Common myeloid progenitor, CD34-positive (primary cell): ENCODE measurements at regions of chr1 and their contacts with region 1.

Region 1: GRCh38 chr1:161298116-161298515 is 11.7 kb downstream of the MPZ start:
- DNase-seq: peak in 2 of 3 donors; percentile 28 to 37
- H3K4me3 ChIP-seq: no peak overlapping the region
- H3K27ac ChIP-seq: no peak overlapping the region
- H3K4me1 ChIP-seq: peaks cover 0 to 11% (median 4%) of the 10 kb centered on the region in 4 experiments
- H3K27me3 ChIP-seq: no peaks in the 10 kb centered on the region

Region 2: DNA sequence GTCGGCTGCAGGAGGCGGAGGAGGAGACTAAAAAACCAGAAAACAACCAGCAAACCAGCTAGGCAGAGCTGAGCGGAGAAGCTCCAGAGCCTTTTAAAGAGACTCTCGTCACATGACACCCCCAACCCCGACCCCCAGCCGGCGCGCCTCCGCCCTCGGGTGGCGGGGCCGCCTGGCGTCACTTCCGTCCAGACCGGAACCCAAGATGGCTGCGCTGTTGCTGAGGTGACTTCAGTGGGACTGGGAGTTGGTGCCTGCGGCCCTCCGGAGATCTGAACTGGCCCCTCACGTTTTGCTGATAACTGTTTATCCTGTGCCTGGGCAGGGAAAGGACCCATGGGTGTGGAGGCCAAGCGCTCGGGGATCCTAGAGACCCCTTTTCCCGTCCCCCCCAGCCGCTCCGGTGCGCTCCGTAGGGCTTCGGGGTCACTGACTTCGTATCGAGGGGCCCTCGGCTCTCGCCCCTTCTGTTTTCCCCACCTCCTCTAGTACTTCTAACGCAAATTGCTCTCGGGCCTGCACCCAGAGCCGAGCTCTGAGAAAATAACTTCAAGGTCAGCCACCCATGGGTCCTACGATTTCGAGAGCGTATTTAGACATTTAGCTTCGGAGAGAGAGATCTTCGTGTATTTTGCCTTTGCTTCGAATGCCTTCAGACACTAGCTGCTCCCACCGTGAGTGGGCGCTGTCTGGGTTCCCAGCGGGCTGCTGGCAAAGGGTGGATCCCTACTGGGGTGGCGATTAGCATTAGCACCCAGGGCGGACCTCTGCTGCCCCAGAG is 16.3 kb after region 1 on chr1 and contains the start of gene SDHC:
- CTCF ChIA-PET with region 1: interaction called, 12 read pairs
- POLR2A ChIA-PET with region 1: no interaction called
- DNase-seq: peak; percentile 92 to 97 (median 95)
- H3K4me3 ChIP-seq: peak within 1 kb of the TSS; percentile 84 to 99 (median 95)
- H3K27ac ChIP-seq: peak within 1 kb of the TSS; percentile 98 to 99
- H3K4me1 ChIP-seq: peaks cover 5 to 19% (median 13%) of the 10 kb centered on the region in 4 experiments
- H3K27me3 ChIP-seq: no peaks in the 10 kb centered on the region

Region 3: DNA sequence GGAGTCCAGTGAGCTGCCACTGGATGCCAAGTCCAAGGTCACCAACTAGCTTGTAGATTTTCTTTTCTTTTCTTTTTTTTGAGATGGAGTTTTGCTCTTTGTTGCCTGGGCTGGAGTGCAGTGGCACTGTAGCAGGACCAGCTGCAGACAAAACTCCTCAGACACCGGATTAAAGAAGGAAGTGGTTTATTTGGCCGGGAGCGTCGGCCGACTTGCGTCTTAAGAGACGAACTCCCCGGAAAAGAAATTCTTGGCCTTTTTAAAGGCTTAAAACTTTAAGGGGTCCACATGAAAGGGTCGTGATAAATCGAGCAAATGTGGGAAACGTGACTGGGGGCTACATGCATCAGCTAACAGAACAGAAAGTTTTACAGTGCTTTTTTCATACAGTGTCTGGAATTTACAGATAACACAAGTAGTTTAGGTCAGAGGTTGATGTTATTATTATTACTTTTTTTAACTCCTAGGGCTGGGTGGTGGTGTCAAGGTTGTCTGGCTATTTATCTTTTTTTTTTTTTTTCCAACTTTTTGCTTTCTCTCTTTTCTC is 106.0 kb after region 1 on chr1:
- CTCF ChIA-PET with region 1: no interaction called
- POLR2A ChIA-PET with region 1: no interaction called
- DNase-seq: no peak
- H3K4me3 ChIP-seq: no peak overlapping the region
- H3K27ac ChIP-seq: no peak overlapping the region
- H3K4me1 ChIP-seq: peaks cover 0 to 9% (median 4%) of the 10 kb centered on the region in 4 experiments
- H3K27me3 ChIP-seq: peaks cover 0 to 8% (median 0%) of the 10 kb centered on the region in 5 experiments